ENCODE measurements at regions of chr12 and their contacts with region 1.

Region 1: GRCh38 chr12:15580431-15580830 is 208.8 kb downstream of the EPS8 start:
- DNase-seq: no peak
- ATAC-seq: no peak
- H3K4me3 ChIP-seq: no peak overlapping the region
- H3K27ac ChIP-seq: no peak overlapping the region
- H3K4me1 ChIP-seq: no peaks in the 10 kb centered on the region
- H3K27me3 ChIP-seq: no peaks in the 10 kb centered on the region
- CTCF ChIP-seq: peak; percentile 15; the same call in 1 of the 2 replicates

Region 2: GRCh38 chr12:15350643-15351042 is 229.8 kb before region 1 on chr12:
- CTCF ChIA-PET with region 1: no interaction called
- POLR2A ChIA-PET with region 1: no interaction called
- in situ Hi-C with region 1: no loop called
- intact Hi-C with region 1: no loop called
- DNase-seq: no peak
- ATAC-seq: no peak
- H3K4me3 ChIP-seq: no peak overlapping the region
- H3K27ac ChIP-seq: no peak overlapping the region
- H3K4me1 ChIP-seq: no peaks in the 10 kb centered on the region
- H3K27me3 ChIP-seq: no peaks in the 10 kb centered on the region
- CTCF ChIP-seq: no peak

Region 3: DNA sequence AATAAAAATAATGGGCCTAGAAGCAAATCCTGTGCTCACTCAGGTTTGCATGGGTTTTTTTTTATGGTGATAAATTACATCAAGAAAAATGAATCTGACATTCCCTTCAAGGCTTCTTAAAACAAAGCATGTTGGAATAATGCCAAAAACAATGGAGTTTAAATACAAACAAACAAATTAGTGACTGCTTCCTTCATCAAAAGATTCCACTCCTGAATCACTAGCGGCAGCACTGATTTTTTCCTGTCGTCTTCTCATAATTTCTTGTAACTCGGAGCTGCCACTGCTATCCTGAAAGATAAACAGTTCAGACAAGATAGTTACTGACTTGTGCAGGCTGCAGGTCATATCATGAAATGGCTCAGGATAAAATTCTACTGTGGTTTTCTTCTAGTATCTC is 40.7 kb after region 1 on chr12:
- CTCF ChIA-PET with region 1: no interaction called
- POLR2A ChIA-PET with region 1: interaction called, 10 read pairs
- in situ Hi-C with region 1: no loop called
- intact Hi-C with region 1: no loop called
- DNase-seq: no peak
- ATAC-seq: no peak
- H3K4me3 ChIP-seq: no peak overlapping the region
- H3K27ac ChIP-seq: no peak overlapping the region
- H3K4me1 ChIP-seq: no peaks in the 10 kb centered on the region
- H3K27me3 ChIP-seq: no peaks in the 10 kb centered on the region
- CTCF ChIP-seq: no peak

Region 4: GRCh38 chr12:15796493-15797141 is 216.2 kb after region 1 on chr12:
- CTCF ChIA-PET with region 1: no interaction called
- POLR2A ChIA-PET with region 1: interaction called, 10 read pairs
- in situ Hi-C with region 1: no loop called
- intact Hi-C with region 1: no loop called
- DNase-seq: no peak
- ATAC-seq: peak; percentile 91
- H3K4me3 ChIP-seq: no peak overlapping the region
- H3K27ac ChIP-seq: peak overlapping the region; percentile 54; the same call in 1 of the 2 replicates
- H3K4me1 ChIP-seq: peaks cover 14% of the 10 kb centered on the region; the same call in 1 of the 2 replicates
- H3K27me3 ChIP-seq: no peaks in the 10 kb centered on the region
- CTCF ChIP-seq: no peak

Measured in Panc1 (cell line).